ENCODE measurements at regions of chr13 and their contacts with region 1.

Region 1: DNA sequence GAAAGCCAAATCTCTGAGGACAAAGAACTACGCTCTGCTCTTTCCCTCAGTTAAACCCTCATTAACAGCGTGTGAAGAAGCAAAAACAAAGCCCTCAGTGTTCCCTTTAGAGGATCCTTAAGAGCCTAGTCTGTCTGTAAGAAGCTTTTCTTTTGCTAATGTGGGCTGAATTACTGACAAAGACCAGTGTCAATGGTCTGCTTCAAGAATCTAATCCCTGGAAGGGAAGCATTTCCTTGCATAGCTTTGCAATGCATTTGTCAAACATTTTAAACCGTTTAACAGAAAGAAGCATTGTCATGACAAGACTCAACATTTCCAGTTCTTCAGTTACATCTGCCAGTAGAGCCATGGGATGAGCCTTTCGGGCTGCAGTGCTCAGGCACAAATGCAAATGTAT is 64.9 kb downstream of the EDNRB start:
- DNase-seq: peak in 1 of 2 experiments; percentile 73
- H3K4me3 ChIP-seq: peak overlapping the region in 1 of 4 experiments; percentile 21; a peak in 1 of 8 replicates
- H3K27ac ChIP-seq: peak overlapping the region; percentile 54; the same call in 1 of the 2 replicates
- H3K4me1 ChIP-seq: peaks cover 0 to 19% (median 10%) of the 10 kb centered on the region in 4 experiments; a peak in 4 of 7 replicates
- H3K27me3 ChIP-seq: no peaks in the 10 kb centered on the region
- CTCF ChIP-seq: no peak
- EP300 ChIP-seq: peak in 1 of 2 experiments; percentile 94; a peak in 2 of 3 replicates
- POLR2A ChIP-seq: peak in 1 of 2 experiments; percentile 34; a peak in 1 of 3 replicates
- RAD21 ChIP-seq: no peak; a peak in 1 of 4 replicates

Region 2: GRCh38 chr13:77653301-77653700 is 200.4 kb before region 1 on chr13:
- CTCF ChIA-PET with region 1: no interaction called
- POLR2A ChIA-PET with region 1: no interaction called
- DNase-seq: no peak
- H3K4me3 ChIP-seq: no peak overlapping the region
- H3K27ac ChIP-seq: no peak overlapping the region
- H3K4me1 ChIP-seq: no peaks in the 10 kb centered on the region
- H3K27me3 ChIP-seq: no peaks in the 10 kb centered on the region
- CTCF ChIP-seq: no peak
- EP300 ChIP-seq: no peak
- POLR2A ChIP-seq: no peak
- RAD21 ChIP-seq: no peak

Region 3: DNA sequence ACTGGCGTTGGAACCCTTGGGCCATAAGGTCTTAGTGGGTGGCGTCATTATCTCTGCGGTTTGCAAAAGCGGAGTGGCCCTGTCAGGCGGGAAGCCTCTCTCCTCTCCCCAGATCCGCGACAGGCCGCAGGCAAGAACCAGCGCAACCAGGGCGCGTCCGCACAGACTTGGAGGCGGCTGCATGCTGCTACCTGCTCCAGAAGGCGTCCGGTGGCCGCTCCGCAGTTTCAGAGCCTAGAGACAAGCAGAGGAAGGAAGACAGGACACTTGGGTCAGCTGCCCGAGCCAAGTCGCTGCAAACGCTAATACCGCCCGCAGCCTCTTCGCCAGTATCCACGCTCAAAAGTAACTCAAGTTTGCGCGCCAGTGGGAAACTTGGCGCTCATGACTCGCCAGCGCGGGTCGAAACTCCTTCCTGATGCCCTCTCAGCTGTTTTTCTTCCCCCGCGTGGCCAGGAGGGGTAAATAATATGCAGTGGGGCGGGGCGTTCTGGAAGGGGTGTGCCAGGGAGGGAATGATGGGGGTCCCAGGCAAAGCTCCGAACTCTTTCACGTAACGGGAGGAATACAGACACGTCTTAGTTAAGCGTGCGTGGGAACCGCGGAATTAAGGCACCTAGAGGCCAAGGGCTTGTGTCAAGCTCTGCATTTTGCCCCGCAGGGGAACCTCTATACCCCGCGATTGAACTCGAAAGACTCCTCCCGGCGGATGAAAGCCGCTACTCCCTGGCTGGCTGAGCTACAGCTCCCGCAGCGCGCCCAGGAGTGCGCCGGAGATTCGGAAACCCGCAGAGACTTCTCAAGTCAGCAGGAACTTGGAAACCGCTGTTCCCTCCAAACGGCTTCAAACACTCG is 64.9 kb after region 1 on chr13 and contains the start of gene EDNRB:
- CTCF ChIA-PET with region 1: no interaction called
- POLR2A ChIA-PET with region 1: interaction called, 10 read pairs
- DNase-seq: peak; percentile 29 to 77
- H3K4me3 ChIP-seq: peak within 1 kb of the TSS; percentile 36 to 63 (median 53)
- H3K27ac ChIP-seq: no peak within 1 kb of the TSS
- H3K4me1 ChIP-seq: peaks cover 0 to 15% (median 2%) of the 10 kb centered on the region in 4 experiments; a peak in 4 of 7 replicates
- H3K27me3 ChIP-seq: peaks cover 0 to 3% (median under 1%) of the 10 kb centered on the region in 4 experiments; a peak in 4 of 7 replicates
- CTCF ChIP-seq: no peak
- EP300 ChIP-seq: no peak
- POLR2A ChIP-seq: no peak
- RAD21 ChIP-seq: no peak
- total RNA-seq, gene EDNRB: 67.6 and 73.2 TPM in 2 replicates

Region 4: GRCh38 chr13:77966671-77967070 is 113.0 kb after region 1 on chr13:
- CTCF ChIA-PET with region 1: no interaction called
- POLR2A ChIA-PET with region 1: no interaction called
- DNase-seq: no peak
- H3K4me3 ChIP-seq: no peak overlapping the region
- H3K27ac ChIP-seq: no peak overlapping the region
- H3K4me1 ChIP-seq: no peaks in the 10 kb centered on the region
- H3K27me3 ChIP-seq: no peaks in the 10 kb centered on the region
- CTCF ChIP-seq: no peak
- EP300 ChIP-seq: no peak
- POLR2A ChIP-seq: no peak
- RAD21 ChIP-seq: no peak

Region 5: DNA sequence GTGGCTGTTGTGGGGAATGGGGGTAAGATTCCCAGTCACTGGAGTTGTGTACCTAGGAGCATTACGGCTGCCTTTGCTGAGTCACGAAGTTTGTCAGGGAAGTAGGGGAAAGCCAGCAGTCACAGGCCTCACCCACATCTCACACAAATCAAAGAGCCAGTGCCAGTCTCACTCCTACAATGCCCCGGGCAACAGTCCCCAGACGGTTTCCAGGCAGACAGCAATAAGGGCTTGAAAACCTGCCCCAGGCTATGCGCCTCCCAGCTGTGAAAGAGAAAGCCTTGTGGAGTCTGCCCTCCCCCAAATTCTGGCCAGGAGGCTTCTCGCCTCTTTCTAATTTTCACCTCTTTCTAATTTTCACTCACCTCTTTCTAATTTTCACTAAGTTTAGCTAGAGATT is 207.3 kb after region 1 on chr13:
- CTCF ChIA-PET with region 1: no interaction called
- POLR2A ChIA-PET with region 1: no interaction called
- DNase-seq: no peak
- H3K4me3 ChIP-seq: no peak overlapping the region
- H3K27ac ChIP-seq: no peak overlapping the region
- H3K4me1 ChIP-seq: no peaks in the 10 kb centered on the region
- H3K27me3 ChIP-seq: no peaks in the 10 kb centered on the region
- CTCF ChIP-seq: no peak
- EP300 ChIP-seq: no peak
- POLR2A ChIP-seq: no peak
- RAD21 ChIP-seq: no peak